GM12878 (cell line): ENCODE measurements at regions of chr10 and their contacts with region 1.

Region 1: GRCh38 chr10:45580371-45581215 is 92.0 kb downstream of the ZFAND4 start:
- DNase-seq: peak; percentile 49
- ATAC-seq: peak; percentile 84
- H3K4me3 ChIP-seq: peak overlapping the region; percentile 53
- H3K27ac ChIP-seq: peak overlapping the region; percentile 95
- H3K4me1 ChIP-seq: peaks cover 18% of the 10 kb centered on the region
- H3K27me3 ChIP-seq: no peaks in the 10 kb centered on the region
- CTCF ChIP-seq: no peak
- EP300 ChIP-seq: no peak
- POLR2A ChIP-seq: no peak
- RAD21 ChIP-seq: no peak

Region 2: DNA sequence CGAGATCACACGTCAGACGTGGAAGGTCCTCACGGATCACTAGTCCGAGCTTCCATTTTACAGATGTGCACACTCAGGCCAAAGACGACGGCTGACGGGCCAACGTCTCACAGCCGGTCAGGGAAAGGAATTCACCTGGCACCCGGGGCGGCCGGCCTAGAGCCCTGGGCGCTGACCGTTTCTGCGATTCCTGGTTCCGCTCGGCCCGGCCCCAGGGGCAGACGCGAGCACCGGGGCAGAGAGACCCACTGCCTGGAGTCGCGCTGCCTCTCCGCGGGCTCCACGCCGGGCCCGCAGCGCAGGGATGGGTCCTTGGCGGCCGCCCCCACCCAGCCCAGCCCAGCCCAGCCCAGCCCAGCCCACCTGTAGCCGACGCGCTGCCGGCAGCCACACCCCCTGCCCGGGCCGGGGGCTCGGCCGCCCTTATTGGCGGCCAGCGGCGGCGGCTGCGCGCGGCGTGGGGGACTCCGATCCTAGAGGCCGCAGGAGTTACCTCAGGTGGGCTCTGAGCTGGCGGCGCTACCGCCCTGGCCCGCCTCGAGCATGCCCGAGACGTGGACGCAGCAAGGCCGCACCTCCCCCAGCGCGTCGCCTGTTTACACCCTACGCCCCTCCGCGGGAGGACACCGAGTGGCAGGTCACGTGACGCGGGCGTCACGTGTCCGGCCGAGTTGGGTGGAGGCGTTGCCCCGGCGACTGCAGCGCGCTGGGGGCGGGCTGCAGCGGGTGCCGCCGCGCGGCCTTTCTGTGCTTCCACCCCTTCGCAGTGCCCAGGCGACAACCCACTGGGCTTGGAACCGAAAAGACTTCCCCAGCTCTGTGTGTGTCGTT is 13.9 kb after region 1 on chr10:
- CTCF ChIA-PET with region 1: interaction called, 16 read pairs
- POLR2A ChIA-PET with region 1: interaction called, 7 read pairs
- RAD21 ChIA-PET with region 1: interaction called, 7 read pairs
- SMC1A ChIA-PET with region 1: interaction called, 21 read pairs
- in situ Hi-C with region 1: no loop called
- intact Hi-C with region 1: no loop called
- DNase-seq: peak; percentile 53
- ATAC-seq: peak; percentile 95
- H3K4me3 ChIP-seq: peak overlapping the region; percentile 74
- H3K27ac ChIP-seq: peak overlapping the region; percentile 71
- H3K4me1 ChIP-seq: peaks cover 3% of the 10 kb centered on the region; the same call in 1 of the 2 replicates
- H3K27me3 ChIP-seq: no peaks in the 10 kb centered on the region
- CTCF ChIP-seq: peak in 2 of 3 experiments; percentile 11 to 29; a peak in 2 of 6 replicates
- EP300 ChIP-seq: peak; percentile 19 to 49; a peak in 2 of 4 replicates
- POLR2A ChIP-seq: peak; percentile 84
- RAD21 ChIP-seq: 0 out of 2 replicates have a peak, but pooled peaks have one; percentile 10

Region 3: DNA sequence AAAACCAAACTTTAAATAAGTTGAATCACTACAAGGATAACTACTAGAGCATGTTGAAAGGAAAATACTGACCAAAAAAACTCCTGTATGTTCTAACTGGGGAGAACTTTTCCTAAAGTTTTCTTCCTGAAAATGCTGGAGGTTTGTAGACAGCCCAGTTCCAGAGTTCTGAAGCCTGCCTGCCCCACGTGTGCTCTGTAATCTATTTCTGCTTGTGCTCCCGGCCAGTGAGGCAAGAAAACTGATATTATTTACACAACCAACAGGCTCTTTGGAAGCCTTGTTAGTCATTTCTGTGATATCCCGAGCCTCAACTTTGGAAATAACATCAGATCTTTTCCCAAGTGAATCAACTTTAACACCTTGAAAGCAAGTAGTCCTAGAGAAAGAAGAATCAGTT is 45.3 kb after region 1 on chr10:
- CTCF ChIA-PET with region 1: no interaction called
- POLR2A ChIA-PET with region 1: no interaction called
- RAD21 ChIA-PET with region 1: no interaction called
- SMC1A ChIA-PET with region 1: no interaction called
- in situ Hi-C with region 1: no loop called
- intact Hi-C with region 1: no loop called
- DNase-seq: no peak
- ATAC-seq: no peak
- H3K4me3 ChIP-seq: no peak overlapping the region
- H3K27ac ChIP-seq: no peak overlapping the region
- H3K4me1 ChIP-seq: no peaks in the 10 kb centered on the region
- H3K27me3 ChIP-seq: no peaks in the 10 kb centered on the region
- CTCF ChIP-seq: no peak
- EP300 ChIP-seq: no peak
- POLR2A ChIP-seq: no peak
- RAD21 ChIP-seq: no peak